CD14-positive monocyte (primary cell): ENCODE measurements at regions of chr20 and their contacts with region 1.

Region 1: GRCh38 chr20:40497899-40498691 is 190.9 kb downstream of the MAFB start:
- DNase-seq: peak; percentile 96 to 99 (median 97)
- H3K4me3 ChIP-seq: peak overlapping the region in 1 of 3 experiments; percentile 40
- H3K4me3 Mint-ChIP-seq: peak overlapping the region; percentile 17 to 67
- H3K27ac ChIP-seq: peak overlapping the region; percentile 96 to 99
- H3K27ac Mint-ChIP-seq: peak overlapping the region; percentile 98 to 100 (median 100)
- H3K4me1 ChIP-seq: peaks cover 82% of the 10 kb centered on the region in 2 donors
- H3K4me1 Mint-ChIP-seq: peaks cover 86% of the 10 kb centered on the region
- H3K27me3 ChIP-seq: no peaks in the 10 kb centered on the region
- H3K27me3 Mint-ChIP-seq: no peaks in the 10 kb centered on the region
- CTCF ChIP-seq: no peak

Region 2: GRCh38 chr20:40463171-40463570 is 34.9 kb before region 1 on chr20:
- intact Hi-C with region 1: loop called in 1 of 2 experiments (anchors 2 kb)
- DNase-seq: no peak
- H3K4me3 ChIP-seq: no peak overlapping the region
- H3K4me3 Mint-ChIP-seq: no peak overlapping the region
- H3K27ac ChIP-seq: peak overlapping the region in 1 of 2 donors; percentile 83
- H3K27ac Mint-ChIP-seq: peak overlapping the region in 6 of 7 donors; percentile 49 to 91 (median 78)
- H3K4me1 ChIP-seq: peaks cover 47 to 59% of the 10 kb centered on the region in 2 donors
- H3K4me1 Mint-ChIP-seq: peaks cover 56% of the 10 kb centered on the region
- H3K27me3 ChIP-seq: no peaks in the 10 kb centered on the region
- H3K27me3 Mint-ChIP-seq: peaks cover 2 to 6% (median 3%) of the 10 kb centered on the region in 3 donors
- CTCF ChIP-seq: no peak

Region 3: GRCh38 chr20:40532103-40532502 is 34.0 kb after region 1 on chr20:
- intact Hi-C with region 1: no loop called
- DNase-seq: peak in 2 of 3 donors; percentile 18 to 34
- H3K4me3 ChIP-seq: no peak overlapping the region
- H3K4me3 Mint-ChIP-seq: no peak overlapping the region
- H3K27ac ChIP-seq: no peak overlapping the region
- H3K27ac Mint-ChIP-seq: no peak overlapping the region
- H3K4me1 ChIP-seq: peaks cover 0 to 4% of the 10 kb centered on the region in 2 donors
- H3K4me1 Mint-ChIP-seq: peaks cover 6% of the 10 kb centered on the region
- H3K27me3 ChIP-seq: peaks cover 0 to 4% of the 10 kb centered on the region in 2 donors
- H3K27me3 Mint-ChIP-seq: peaks cover 7 to 18% (median 12%) of the 10 kb centered on the region in 3 donors
- CTCF ChIP-seq: peak; percentile 50

Region 4: DNA sequence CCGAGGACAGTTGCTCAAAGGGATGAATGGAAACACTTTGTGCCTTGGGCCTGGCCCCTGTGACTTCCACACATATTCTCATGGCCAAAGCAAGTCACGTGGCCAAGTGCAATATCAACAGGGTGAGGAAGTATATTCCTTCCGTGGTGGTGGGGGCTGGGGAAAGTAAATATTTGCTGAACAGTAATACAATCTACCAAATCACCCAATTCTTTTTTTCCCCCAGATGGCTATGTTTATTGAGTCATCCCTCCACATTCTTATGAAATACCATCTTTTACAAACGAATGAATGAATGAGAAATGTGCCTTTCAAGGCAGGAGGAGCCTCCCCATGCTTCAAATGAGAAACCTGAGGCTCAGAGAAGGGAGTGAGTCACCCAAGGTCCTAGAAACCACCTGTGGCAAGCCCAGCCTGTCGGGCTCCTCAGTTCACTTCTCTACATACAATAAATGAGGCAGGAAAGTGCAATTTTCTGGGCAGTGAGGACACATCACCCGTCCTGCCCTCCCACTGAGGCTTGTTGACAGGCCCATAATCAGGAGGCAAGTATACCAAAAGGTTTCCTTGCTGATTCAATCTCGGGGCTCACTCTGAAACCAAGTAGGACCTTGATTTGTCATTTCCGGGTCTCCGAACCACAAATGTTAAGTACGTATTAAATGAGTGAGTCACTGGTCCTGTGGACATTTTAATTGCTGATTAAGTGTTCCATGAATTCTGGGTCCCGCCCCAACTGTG is 505.2 kb after region 1 on chr20:
- intact Hi-C with region 1: loop called (anchors 10 kb)
- DNase-seq: peak; percentile 88 to 94 (median 91)
- H3K4me3 ChIP-seq: peak overlapping the region in 1 of 3 experiments; percentile 36
- H3K4me3 Mint-ChIP-seq: peak overlapping the region; percentile 59 to 67
- H3K27ac ChIP-seq: peak overlapping the region; percentile 86 to 95
- H3K27ac Mint-ChIP-seq: peak overlapping the region; percentile 97 to 99 (median 99)
- H3K4me1 ChIP-seq: peaks cover 70 to 74% of the 10 kb centered on the region in 2 donors
- H3K4me1 Mint-ChIP-seq: peaks cover 65% of the 10 kb centered on the region
- H3K27me3 ChIP-seq: no peaks in the 10 kb centered on the region
- H3K27me3 Mint-ChIP-seq: peaks cover 0 to 2% (median 0%) of the 10 kb centered on the region in 3 donors
- CTCF ChIP-seq: no peak